OCI-LY7 (cell line): ENCODE measurements at regions of chr6 and their contacts with region 1.

Region 1: GRCh38 chr6:31680840-31681671 is at the start of gene LY6G5C:
- DNase-seq: peak; percentile 74
- H3K4me3 ChIP-seq: peak within 1 kb of the TSS; percentile 18
- H3K27ac ChIP-seq: no peak within 1 kb of the TSS
- H3K4me1 ChIP-seq: peaks cover 30% of the 10 kb centered on the region
- CTCF ChIP-seq: no peak; the same call in 1 of the 2 replicates
- total RNA-seq, gene LY6G5C: 1.6 and 1.8 TPM in 2 replicates

Region 2: DNA sequence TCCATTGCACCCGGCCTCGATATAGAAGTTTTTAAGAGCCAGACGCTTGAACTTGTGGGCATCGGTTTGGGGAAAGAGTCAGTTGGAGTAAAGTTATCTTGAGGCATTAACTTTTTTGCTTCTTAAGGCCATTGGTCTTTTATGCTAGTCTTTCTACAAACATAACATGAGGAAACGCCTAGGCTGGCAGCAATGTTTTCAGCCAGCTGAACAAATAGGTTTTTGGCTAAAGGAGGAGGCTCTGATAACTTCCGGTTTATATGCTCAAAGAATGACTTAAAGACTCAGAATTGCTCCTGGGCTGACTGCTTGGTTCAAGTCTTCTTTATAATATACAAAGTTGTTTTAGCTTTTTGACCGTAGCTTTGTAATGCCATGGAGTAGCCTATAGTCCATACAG is 455.3 kb before region 1 on chr6:
- CTCF ChIA-PET with region 1: no interaction called
- POLR2A ChIA-PET with region 1: no interaction called
- intact Hi-C with region 1: loop called (anchors 10 kb)
- DNase-seq: no peak
- H3K4me3 ChIP-seq: no peak overlapping the region
- H3K27ac ChIP-seq: no peak overlapping the region
- H3K4me1 ChIP-seq: peaks cover 68% of the 10 kb centered on the region
- CTCF ChIP-seq: no peak

Region 3: DNA sequence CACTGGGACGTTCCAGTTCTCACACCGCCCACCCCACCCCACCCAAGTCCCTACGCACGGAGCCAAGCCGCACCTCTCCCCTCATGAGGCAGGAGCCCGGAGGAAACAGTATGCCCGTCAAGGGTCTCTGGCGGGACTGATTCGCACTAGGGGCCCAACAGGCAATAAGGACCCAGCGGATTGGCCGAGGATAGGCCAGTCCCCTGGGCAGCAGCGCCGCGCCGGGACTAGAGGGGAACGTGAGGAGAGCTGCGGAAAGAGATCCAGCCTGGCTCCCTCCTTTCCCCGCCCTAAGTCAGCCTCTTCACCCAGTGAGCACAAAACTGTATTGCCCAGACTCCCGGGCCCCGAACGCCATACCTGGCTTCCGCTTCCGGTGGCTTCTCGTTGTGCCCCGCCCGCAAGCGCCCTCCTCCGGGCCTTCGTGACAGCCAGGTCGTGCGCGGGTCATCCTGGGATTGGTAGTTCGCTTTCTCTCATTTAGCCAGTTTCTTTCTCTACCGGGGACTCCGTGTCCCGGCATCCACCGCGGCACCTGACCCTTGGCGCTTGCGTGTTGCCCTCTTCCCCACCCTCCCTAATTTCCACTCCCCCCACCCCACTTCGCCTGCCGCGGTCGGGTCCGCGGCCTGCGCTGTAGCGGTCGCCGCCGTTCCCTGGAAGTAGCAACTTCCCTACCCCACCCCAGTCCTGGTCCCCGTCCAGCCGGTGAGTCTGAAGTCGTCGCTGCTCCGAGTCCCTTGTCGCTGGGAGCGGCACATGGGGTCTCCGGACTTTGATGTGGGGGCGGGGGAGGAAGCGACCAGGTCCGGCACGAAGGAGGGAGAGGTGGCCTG is 15.3 kb before region 1 on chr6 and contains the start of gene CSNK2B:
- CTCF ChIA-PET with region 1: no interaction called
- POLR2A ChIA-PET with region 1: no interaction called
- intact Hi-C with region 1: no loop called
- DNase-seq: peak; percentile 98
- H3K4me3 ChIP-seq: peak within 1 kb of the TSS; percentile 99
- H3K27ac ChIP-seq: peak within 1 kb of the TSS; percentile 90
- H3K4me1 ChIP-seq: peaks cover 43% of the 10 kb centered on the region
- CTCF ChIP-seq: no peak
- total RNA-seq, gene CSNK2B: 207 and 230 TPM in 2 replicates

Region 4: DNA sequence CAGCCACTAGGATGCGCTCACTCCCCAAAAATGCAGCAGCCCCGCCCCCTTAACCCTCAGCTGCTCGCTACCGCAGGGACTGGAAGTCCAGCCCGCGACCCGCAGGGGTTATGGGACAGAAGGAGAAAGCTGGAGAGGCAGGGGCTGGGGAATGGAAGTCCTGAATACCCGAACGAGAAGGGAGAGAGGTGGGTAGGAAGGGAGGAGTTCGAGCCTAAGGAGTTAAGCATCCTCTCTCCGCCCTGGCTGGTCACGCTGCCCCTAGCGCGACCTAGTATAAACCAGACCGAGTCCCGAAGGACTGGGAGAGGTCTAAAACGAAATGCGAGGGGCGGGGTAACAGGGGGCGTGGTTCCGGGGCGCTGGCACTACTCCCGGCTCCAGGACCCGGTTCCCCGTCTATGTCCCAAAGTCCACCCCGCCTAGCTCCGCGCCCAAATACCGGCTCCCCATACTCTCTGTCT is 48.5 kb after region 1 on chr6:
- CTCF ChIA-PET with region 1: no interaction called
- POLR2A ChIA-PET with region 1: no interaction called
- intact Hi-C with region 1: loop called (anchors 2 kb)
- DNase-seq: peak; percentile 85
- H3K4me3 ChIP-seq: peak overlapping the region; percentile 66
- H3K27ac ChIP-seq: peak overlapping the region; percentile 2
- H3K4me1 ChIP-seq: peaks cover 54% of the 10 kb centered on the region
- CTCF ChIP-seq: 0 out of 2 replicates have a peak, but pooled peaks have one; percentile 25

Region 5: DNA sequence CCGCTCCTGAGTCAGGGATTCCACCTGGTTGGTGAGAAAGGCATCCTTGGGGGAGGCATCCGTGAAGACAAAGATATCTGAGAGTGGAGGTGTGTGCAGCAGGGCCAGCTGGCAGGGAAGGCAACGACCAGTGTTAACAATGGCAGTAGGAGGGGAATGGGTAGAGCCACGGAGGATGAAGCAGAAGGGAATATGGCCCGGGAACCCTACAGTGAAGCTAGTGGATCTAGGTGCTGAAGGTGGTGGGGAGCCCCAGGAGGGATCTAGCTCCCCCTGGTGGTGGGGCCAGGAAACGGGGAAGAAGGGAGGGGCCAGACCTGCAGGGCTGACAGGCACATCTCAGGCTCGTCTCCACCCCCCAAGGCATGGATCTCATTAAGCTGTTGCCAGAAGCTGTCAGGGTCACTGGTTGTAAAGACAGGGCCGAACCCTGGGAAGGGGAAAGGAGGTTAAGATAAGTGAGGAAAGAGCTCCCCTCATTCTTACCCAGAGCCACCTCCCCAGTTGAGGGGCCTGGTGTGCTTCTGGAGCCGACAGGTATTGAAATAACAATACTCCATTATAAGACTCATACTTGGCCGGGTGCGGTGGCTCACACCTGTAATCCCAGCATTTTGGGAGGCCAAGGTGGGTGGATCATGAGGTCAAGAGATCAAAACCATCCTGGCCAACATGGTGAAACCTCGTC is 88.8 kb after region 1 on chr6:
- CTCF ChIA-PET with region 1: no interaction called
- POLR2A ChIA-PET with region 1: no interaction called
- intact Hi-C with region 1: loop called (anchors 1 kb)
- DNase-seq: peak; percentile 75
- H3K4me3 ChIP-seq: no peak overlapping the region
- H3K27ac ChIP-seq: no peak overlapping the region
- H3K4me1 ChIP-seq: no peaks in the 10 kb centered on the region
- CTCF ChIP-seq: peak; percentile 93

Region 6: DNA sequence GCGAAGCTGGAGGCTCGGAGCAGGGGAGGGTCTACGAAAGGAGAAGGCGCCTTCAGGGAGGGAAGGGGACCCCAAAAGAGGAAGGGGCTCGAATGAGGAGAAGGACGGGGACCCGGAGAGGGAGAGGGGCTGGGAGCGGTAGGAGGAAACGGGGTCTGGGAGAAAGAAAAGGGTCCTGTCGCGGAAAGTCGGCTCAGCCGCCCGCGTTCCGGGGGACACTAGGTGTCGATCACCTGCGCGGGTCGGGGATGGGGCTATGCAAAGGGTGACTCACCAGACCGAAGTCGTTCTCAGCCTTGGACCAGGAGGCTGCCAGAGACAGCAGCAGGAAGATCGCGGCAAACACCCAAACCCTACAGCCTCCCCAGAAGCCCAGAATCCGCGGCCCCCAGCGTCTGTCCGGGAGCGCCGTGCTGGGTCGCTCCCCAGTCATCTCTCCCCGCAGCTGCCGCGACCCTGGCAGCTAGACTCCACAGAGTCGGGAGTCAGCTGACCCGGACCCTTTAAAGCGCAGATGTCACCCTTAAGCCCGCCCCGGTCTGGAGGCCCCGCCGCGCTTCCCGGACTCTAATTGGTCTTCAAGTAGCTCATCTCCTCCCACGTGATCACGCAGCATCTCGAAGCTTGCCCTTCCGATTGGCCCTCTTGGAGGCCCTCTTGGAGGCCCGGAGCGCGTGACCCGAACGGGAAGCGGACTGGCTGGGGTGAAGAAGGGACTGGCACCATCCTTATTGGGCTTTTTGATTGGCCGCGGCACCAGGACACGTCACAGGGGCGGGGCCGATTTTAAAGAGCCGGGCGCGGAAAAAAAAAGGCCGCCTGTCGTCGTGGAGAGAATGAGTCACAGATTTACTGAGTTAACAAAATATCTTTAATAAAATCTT is 181.5 kb after region 1 on chr6 and contains the start of gene NEU1:
- CTCF ChIA-PET with region 1: interaction called, 4 read pairs
- POLR2A ChIA-PET with region 1: no interaction called
- intact Hi-C with region 1: loop called (anchors 1 kb)
- DNase-seq: peak; percentile 100
- H3K4me3 ChIP-seq: peak within 1 kb of the TSS; percentile 75
- H3K27ac ChIP-seq: peak within 1 kb of the TSS; percentile 74
- H3K4me1 ChIP-seq: peaks cover 20% of the 10 kb centered on the region
- CTCF ChIP-seq: no peak
- total RNA-seq, gene NEU1: 5.5 and 7.0 TPM in 2 replicates

Region 7: DNA sequence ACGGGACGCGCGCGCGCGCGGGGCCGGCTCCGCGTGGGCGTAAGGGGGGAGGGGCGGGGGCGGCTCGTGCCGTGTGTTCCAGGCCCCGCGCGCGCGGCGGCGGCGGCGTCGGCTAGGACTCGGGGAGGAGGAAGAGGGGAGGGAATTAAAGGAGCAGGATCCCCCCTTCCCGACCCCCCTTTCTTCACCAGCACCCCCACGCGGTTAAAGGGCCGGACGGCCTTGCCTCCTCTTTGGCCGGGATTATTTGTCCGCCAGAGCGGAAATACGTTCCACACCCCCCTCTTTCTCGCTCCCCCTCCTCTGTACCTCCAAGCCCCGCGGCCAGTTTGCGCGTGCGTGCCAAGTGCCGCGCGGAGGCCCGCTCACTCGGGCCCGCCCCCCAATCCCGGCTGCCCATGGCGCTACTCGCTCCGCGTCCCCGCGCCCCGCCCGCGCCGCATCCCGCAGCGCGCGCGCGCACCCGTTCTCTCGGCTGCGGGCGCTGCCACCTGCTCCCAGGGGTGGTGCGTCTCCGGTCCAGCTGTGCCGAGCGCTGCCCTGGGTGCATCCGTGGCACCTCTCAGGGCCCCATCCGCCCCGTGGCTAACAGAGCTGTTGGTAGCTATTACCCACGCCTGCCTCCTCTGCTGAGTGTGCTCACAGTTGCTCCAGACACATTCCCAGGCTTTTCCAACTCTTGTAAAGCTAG is 221.0 kb after region 1 on chr6 and contains the start of gene ZBTB12:
- CTCF ChIA-PET with region 1: no interaction called
- POLR2A ChIA-PET with region 1: no interaction called
- intact Hi-C with region 1: loop called (anchors 10 kb)
- DNase-seq: peak; percentile 95
- H3K4me3 ChIP-seq: peak within 1 kb of the TSS; percentile 75
- H3K27ac ChIP-seq: peak within 1 kb of the TSS; percentile 11
- H3K4me1 ChIP-seq: peaks cover 30% of the 10 kb centered on the region
- CTCF ChIP-seq: no peak
- total RNA-seq, gene ZBTB12: 12.8 and 17.6 TPM in 2 replicates